ENCODE measurements at regions of chr2 and their contacts with region 1.

Region 1: GRCh38 chr2:20593072-20594034 is 57.5 kb downstream of the HS1BP3 start:
- DNase-seq: peak in 1 of 2 donors; percentile 52
- H3K4me3 ChIP-seq: no peak overlapping the region
- H3K27ac ChIP-seq: peak overlapping the region; percentile 76 to 91
- H3K4me1 ChIP-seq: peaks cover 0 to 9% of the 10 kb centered on the region in 2 donors
- H3K27me3 ChIP-seq: no peaks in the 10 kb centered on the region
- CTCF ChIP-seq: no peak
- POLR2A ChIP-seq: no peak

Region 2: GRCh38 chr2:19863303-19864041 is 729.9 kb before region 1 on chr2:
- intact Hi-C with region 1: no loop called
- DNase-seq: peak in 1 of 2 donors; percentile 66
- H3K4me3 ChIP-seq: peak overlapping the region in 2 of 3 donors; percentile 15 to 43
- H3K27ac ChIP-seq: no peak overlapping the region
- H3K4me1 ChIP-seq: no peaks in the 10 kb centered on the region
- H3K27me3 ChIP-seq: no peaks in the 10 kb centered on the region
- CTCF ChIP-seq: peak; percentile 85 to 98 (median 96)
- POLR2A ChIP-seq: no peak

Region 3: DNA sequence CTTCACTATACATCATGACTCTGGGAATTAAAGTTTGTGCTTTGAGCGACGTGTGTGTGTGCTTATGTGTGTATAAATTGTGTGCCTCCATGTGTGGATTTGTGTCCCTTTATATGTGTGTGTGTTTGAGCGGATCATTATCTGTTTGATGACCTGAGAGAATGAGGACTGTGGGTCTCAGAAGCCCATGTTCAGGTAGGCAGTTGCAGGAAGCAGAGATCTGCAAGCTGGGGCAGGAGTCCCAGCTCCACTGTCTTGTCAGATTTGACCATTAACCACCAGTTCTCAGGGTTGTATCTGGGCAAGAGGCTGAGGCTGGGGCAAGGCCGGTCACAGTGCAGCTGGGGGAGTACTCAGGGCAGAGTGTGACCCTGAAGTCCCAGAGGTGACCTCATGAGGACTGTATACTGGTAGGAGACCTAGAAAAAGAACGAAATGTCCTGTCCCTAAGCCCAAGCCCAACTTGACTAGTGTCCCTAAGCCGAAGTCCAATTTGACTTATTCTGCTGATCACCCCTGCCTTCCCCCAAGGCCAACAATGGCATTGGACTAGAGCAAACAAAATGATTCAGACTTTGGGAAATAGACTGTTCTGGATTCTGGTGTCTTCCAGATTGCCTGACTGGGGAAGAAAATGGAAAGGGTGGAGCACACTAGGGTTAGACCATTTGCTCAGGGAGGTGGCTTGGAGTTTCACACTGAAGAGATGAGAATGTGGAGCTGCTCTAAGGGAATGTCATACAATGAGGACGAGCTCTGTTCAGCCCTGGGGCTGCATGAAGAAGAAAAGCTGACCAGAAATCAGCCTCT is 118.4 kb before region 1 on chr2:
- intact Hi-C with region 1: loop called (anchors 1 kb)
- DNase-seq: peak in 1 of 2 donors; percentile 15
- H3K4me3 ChIP-seq: no peak overlapping the region
- H3K27ac ChIP-seq: peak overlapping the region; percentile 50 to 62
- H3K4me1 ChIP-seq: no peaks in the 10 kb centered on the region
- H3K27me3 ChIP-seq: no peaks in the 10 kb centered on the region
- CTCF ChIP-seq: no peak
- POLR2A ChIP-seq: no peak

Region 4: DNA sequence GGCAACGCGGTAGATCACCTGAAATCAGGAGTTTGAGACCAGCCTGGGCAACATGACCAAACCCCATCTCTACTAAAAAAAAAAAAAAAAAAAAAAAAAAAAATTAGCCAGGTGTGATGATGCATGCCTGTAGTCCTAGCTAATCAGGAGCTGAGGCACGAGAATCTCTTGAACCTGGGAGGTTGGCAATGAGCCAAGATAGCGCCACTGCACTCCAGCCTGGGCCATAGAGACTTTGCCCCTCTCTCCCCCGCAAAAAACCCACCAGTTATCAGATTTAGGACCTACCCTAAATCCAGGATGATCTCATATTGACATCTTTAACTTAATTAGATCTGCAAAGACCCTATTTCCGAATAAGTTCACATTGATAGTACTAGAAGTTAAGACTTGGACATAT is 258.8 kb after region 1 on chr2:
- intact Hi-C with region 1: no loop called
- DNase-seq: no peak
- H3K4me3 ChIP-seq: no peak overlapping the region
- H3K27ac ChIP-seq: no peak overlapping the region
- H3K4me1 ChIP-seq: no peaks in the 10 kb centered on the region
- H3K27me3 ChIP-seq: no peaks in the 10 kb centered on the region
- CTCF ChIP-seq: no peak
- POLR2A ChIP-seq: no peak

Measured in breast epithelium (tissue), 4 donors.